Panc1 (cell line): ENCODE measurements at regions of chr2 and their contacts with region 1.

Region 1: DNA sequence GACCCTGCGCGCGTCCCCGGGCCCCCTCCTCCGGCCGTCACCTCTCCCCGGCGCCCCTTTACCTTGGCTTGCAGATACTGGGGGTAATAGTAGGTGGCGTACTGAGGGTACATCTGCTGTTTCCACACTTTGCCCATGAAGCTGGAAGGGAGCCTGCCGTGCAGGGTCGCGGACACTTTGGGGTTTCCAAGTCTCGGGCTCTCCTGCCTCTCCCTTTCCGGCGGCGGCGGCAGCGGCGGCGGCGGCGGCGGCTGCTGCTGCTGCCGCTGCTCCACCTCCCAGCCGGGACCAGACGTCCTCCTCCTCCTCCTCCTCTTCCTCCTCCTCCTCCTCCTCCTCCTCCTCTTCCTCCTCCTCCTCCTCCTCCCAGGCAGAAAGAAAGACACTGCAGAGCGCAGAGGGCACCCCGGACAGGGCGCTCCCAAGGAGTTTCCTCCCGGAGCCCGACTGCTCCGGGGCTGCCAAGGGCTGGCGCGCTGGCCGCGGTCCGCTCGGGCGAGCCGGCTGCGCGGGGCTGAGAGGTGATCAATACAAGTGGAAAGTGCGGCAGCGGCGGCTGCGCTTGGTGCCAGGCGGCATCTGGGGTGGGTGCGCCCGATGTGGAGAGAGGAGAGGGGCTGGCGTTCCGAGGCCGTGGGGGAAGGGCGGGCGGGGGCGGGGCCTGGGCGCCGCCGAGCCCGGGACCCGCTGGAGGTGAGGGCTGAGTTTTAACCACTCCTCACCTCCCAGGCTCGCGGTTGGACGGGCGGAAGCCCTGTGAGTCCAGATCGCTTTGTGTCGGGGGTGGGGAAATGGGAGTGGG is at the start of gene RBMS1:
- DNase-seq: no peak
- ATAC-seq: peak; percentile 77
- H3K4me3 ChIP-seq: peak within 1 kb of the TSS; percentile 69 to 74
- H3K27ac ChIP-seq: peak within 1 kb of the TSS; percentile 77
- H3K4me1 ChIP-seq: peaks cover 12% of the 10 kb centered on the region
- H3K27me3 ChIP-seq: peaks cover 5% of the 10 kb centered on the region; the same call in 1 of the 2 replicates
- CTCF ChIP-seq: no peak
- total RNA-seq, gene RBMS1: 67.0 TPM

Region 2: GRCh38 chr2:160423126-160423525 is 70.3 kb before region 1 on chr2:
- CTCF ChIA-PET with region 1: no interaction called
- POLR2A ChIA-PET with region 1: no interaction called
- in situ Hi-C with region 1: no loop called
- intact Hi-C with region 1: no loop called
- DNase-seq: no peak
- ATAC-seq: no peak
- H3K4me3 ChIP-seq: no peak overlapping the region
- H3K27ac ChIP-seq: no peak overlapping the region
- H3K4me1 ChIP-seq: peaks cover 3% of the 10 kb centered on the region
- H3K27me3 ChIP-seq: no peaks in the 10 kb centered on the region; the same call in 1 of the 2 replicates
- CTCF ChIP-seq: no peak

Region 3: DNA sequence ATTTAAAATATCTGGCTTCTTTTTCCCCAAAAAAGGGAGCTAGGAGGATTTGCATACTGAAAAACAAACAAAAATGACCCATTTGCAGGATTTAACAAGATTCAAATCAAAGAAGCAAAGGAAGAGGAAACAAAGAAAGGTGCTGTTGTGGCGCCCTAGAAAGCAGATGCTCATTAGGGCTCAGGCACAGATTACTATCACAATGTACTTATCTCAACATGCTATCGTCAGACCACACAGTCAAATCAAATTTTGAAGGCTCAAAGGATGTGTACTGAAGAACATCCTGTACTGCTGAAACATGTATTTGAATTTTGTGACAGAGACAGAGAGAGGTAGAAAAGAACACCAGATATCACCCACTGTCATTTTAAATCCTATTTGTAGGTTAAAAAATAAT is 10.8 kb before region 1 on chr2:
- CTCF ChIA-PET with region 1: interaction called, 3 read pairs
- POLR2A ChIA-PET with region 1: interaction called, 13 read pairs
- in situ Hi-C with region 1: no loop called
- intact Hi-C with region 1: no loop called
- DNase-seq: no peak
- ATAC-seq: no peak
- H3K4me3 ChIP-seq: no peak overlapping the region
- H3K27ac ChIP-seq: no peak overlapping the region
- H3K4me1 ChIP-seq: no peaks in the 10 kb centered on the region
- H3K27me3 ChIP-seq: peaks cover 2% of the 10 kb centered on the region; the same call in 1 of the 2 replicates
- CTCF ChIP-seq: no peak

Region 4: GRCh38 chr2:160516547-160517365 is 23.3 kb after region 1 on chr2:
- CTCF ChIA-PET with region 1: no interaction called
- POLR2A ChIA-PET with region 1: interaction called, 14 read pairs
- in situ Hi-C with region 1: no loop called
- intact Hi-C with region 1: no loop called
- DNase-seq: no peak
- ATAC-seq: no peak
- H3K4me3 ChIP-seq: no peak overlapping the region
- H3K27ac ChIP-seq: no peak overlapping the region
- H3K4me1 ChIP-seq: no peaks in the 10 kb centered on the region
- H3K27me3 ChIP-seq: no peaks in the 10 kb centered on the region
- CTCF ChIP-seq: no peak

Region 5: DNA sequence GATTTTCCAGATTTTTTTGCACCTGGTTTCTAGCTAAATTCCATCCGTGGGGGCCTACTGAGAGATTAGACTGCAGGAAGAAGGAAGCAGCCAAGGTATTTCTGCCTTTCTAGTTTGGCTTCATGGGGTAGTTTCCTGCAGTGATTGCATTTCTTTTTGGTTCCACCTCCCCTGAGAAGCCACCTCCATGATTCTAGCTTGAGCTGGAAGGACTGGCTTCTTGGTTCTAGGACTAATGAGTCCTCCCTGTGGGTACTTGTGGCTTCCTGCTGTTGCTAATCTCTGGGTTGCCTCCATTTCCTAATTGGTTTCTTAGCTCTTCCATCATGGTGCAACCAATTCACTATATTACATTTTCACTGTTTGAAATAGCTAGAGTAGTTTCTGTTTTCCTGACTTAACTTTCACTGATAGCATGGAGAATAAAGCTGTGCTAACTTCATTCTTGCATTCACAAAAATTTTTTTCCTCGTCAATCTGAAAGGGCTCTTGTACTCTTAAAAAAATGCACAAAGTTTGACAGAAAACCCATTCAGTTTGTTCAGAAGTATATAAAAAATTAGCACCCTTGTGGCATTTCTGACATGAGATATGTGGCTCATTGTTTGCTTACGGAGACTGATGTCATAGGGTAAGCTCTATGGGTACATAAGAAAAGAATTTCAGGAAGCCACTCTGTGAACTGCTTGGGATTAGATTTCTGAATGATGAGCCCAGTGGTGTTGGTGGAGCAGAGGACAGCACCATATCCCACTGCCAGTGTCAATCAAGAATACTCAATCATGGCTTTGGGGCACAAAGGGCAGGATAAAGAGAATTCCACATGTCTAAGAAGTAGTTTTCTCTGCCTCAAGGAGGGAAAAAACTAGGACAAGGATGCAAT is 243.0 kb after region 1 on chr2:
- CTCF ChIA-PET with region 1: no interaction called
- POLR2A ChIA-PET with region 1: no interaction called
- in situ Hi-C with region 1: no loop called
- intact Hi-C with region 1: no loop called
- DNase-seq: no peak
- ATAC-seq: no peak
- H3K4me3 ChIP-seq: no peak overlapping the region
- H3K27ac ChIP-seq: no peak overlapping the region
- H3K4me1 ChIP-seq: no peaks in the 10 kb centered on the region
- H3K27me3 ChIP-seq: no peaks in the 10 kb centered on the region
- CTCF ChIP-seq: no peak